ENCODE measurements at regions of chr16 and their contacts with region 1.

Region 1: GRCh38 chr16:10529895-10530669 is 50.3 kb downstream of the EMP2 start:
- DNase-seq: no peak
- ATAC-seq: peak in 7 of 8 donors; percentile 35 to 65 (median 48)
- H3K4me3 ChIP-seq: no peak overlapping the region
- H3K27ac ChIP-seq: peak overlapping the region in 7 of 10 donors; percentile 17 to 69 (median 47)
- H3K4me1 ChIP-seq: peaks cover 0 to 12% (median 0%) of the 10 kb centered on the region in 9 donors
- H3K27me3 ChIP-seq: no peaks in the 10 kb centered on the region
- CTCF ChIP-seq: no peak

Region 2: DNA sequence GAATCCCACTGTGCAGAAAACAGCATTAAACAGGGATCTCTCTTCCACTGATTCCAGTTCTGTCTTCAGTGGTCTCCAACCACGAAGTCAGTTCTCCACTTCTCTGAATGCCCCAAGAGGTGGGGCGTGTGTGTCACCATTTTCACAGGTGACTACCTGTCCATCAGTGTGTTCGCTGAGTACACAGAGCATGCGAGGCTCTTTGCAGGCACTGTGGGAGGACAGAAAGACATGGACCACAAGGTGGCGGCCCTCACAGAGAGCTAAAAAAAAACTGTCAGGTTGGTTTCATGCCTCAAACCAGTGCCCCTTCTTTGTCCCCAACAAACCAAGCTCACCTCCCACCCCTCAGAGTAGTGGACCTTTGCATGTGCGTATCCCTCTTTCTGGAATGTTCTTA is 36.5 kb after region 1 on chr16:
- intact Hi-C with region 1: loop called in 3 of 10 experiments (anchors 5 to 10 kb)
- DNase-seq: no peak
- ATAC-seq: no peak
- H3K4me3 ChIP-seq: no peak overlapping the region
- H3K27ac ChIP-seq: peak overlapping the region in 7 of 10 donors; percentile 5 to 97 (median 33)
- H3K4me1 ChIP-seq: peaks cover 19 to 94% (median 73%) of the 10 kb centered on the region in 9 donors
- H3K27me3 ChIP-seq: no peaks in the 10 kb centered on the region
- CTCF ChIP-seq: no peak

Measured in heart right ventricle (tissue), 16 donors.